OCI-LY7 (cell line): ENCODE measurements at regions of chrX and their contacts with region 1.

Region 1: DNA sequence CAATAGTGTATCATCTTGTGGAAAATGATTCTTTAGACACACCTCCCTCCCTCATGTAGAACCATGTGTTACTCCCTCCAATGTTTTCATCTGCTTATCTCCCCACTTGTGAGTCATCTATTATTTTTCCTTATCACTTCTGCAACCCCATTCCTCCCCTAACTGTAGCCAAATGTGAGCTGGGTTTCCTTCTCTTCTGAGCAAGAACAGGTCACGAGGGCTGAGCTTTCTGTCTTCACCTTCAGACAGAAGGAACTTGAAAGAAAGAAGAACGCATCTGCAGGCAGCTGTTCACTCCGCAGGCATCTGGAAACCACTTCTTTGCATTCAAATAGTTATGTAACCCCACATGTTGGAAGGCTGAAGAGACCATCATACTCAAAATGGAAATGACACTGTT is 1.8 kb downstream of the PPP1R2C start:
- DNase-seq: peak; percentile 66
- H3K4me3 ChIP-seq: no peak overlapping the region
- H3K27ac ChIP-seq: peak overlapping the region; percentile 51
- H3K4me1 ChIP-seq: peaks cover 54% of the 10 kb centered on the region
- CTCF ChIP-seq: no peak

Region 2: GRCh38 chrX:41553688-41554087 is 1222.5 kb before region 1 on chrX:
- CTCF ChIA-PET with region 1: no interaction called
- POLR2A ChIA-PET with region 1: no interaction called
- intact Hi-C with region 1: no loop called
- DNase-seq: no peak
- H3K4me3 ChIP-seq: no peak overlapping the region
- H3K27ac ChIP-seq: no peak overlapping the region
- H3K4me1 ChIP-seq: peaks cover 8% of the 10 kb centered on the region
- CTCF ChIP-seq: no peak

Region 3: GRCh38 chrX:42755820-42756219 is 20.4 kb before region 1 on chrX:
- CTCF ChIA-PET with region 1: no interaction called
- POLR2A ChIA-PET with region 1: no interaction called
- intact Hi-C with region 1: no loop called
- DNase-seq: no peak
- H3K4me3 ChIP-seq: no peak overlapping the region
- H3K27ac ChIP-seq: no peak overlapping the region
- H3K4me1 ChIP-seq: no peaks in the 10 kb centered on the region
- CTCF ChIP-seq: no peak

Region 4: GRCh38 chrX:42837747-42838146 is 61.6 kb after region 1 on chrX:
- CTCF ChIA-PET with region 1: no interaction called
- POLR2A ChIA-PET with region 1: no interaction called
- intact Hi-C with region 1: no loop called
- DNase-seq: no peak
- H3K4me3 ChIP-seq: no peak overlapping the region
- H3K27ac ChIP-seq: no peak overlapping the region
- H3K4me1 ChIP-seq: no peaks in the 10 kb centered on the region
- CTCF ChIP-seq: no peak

Region 5: GRCh38 chrX:42869659-42870476 is 93.7 kb after region 1 on chrX:
- CTCF ChIA-PET with region 1: no interaction called
- POLR2A ChIA-PET with region 1: no interaction called
- intact Hi-C with region 1: loop called (anchors 5 kb)
- DNase-seq: peak; percentile 81
- H3K4me3 ChIP-seq: peak overlapping the region; percentile 20
- H3K27ac ChIP-seq: peak overlapping the region; percentile 97
- H3K4me1 ChIP-seq: peaks cover 40% of the 10 kb centered on the region
- CTCF ChIP-seq: no peak